OCI-LY7 (cell line): ENCODE measurements at regions of chr5 and their contacts with region 1.

Region 1: DNA sequence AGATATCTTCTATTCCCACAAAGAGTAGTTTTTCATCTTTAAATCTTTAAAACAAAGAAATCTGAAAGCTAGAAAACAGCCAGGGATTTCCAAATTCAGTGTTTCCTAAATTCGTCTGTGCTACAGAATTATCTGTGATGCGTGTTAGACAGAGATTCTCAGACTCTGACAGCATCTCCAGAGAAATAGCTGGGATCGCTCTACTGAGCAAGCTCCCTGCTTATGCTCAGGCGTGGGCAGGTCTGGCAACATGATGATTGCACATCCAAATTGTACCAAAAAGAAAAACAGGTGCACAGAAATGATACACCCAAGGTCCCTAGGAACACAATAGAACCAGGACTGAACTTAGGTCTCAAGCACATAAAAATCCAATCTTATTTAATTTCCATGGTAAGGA is 22.8 kb upstream of the CRHBP start:
- DNase-seq: no peak
- H3K4me3 ChIP-seq: no peak overlapping the region
- H3K27ac ChIP-seq: no peak overlapping the region
- H3K4me1 ChIP-seq: no peaks in the 10 kb centered on the region
- CTCF ChIP-seq: no peak

Region 2: GRCh38 chr5:76953551-76954382 is 23.7 kb after region 1 on chr5:
- CTCF ChIA-PET with region 1: no interaction called
- POLR2A ChIA-PET with region 1: interaction called, 14 read pairs
- intact Hi-C with region 1: no loop called
- DNase-seq: no peak
- H3K4me3 ChIP-seq: no peak overlapping the region
- H3K27ac ChIP-seq: no peak overlapping the region
- H3K4me1 ChIP-seq: peaks cover 3% of the 10 kb centered on the region
- CTCF ChIP-seq: no peak